Activated T-helper 1 cell treated with anti-CD3 and anti-CD28 coated beads, Interleukin-12 subunit alpha, Interleukin-12 subunit beta, Interleukin-2, Interleukin-4 antibody, amounts not matched to agents 30 ng/mL and 10 ng/mL and 1 ng/mL, durations not matched to agents 14 hours and 24 hours and 36 hours (primary cell): ENCODE measurements at regions of chr17 and their contacts with region 1.

Region 1: GRCh38 chr17:55527540-55528118 is 16.4 kb upstream of the SMIM36 start:
- DNase-seq: no peak
- H3K4me3 Mint-ChIP-seq: no peak overlapping the region
- H3K27ac Mint-ChIP-seq: no peak overlapping the region
- H3K4me1 Mint-ChIP-seq: peaks cover 9% of the 10 kb centered on the region
- H3K27me3 Mint-ChIP-seq: peaks cover 5% of the 10 kb centered on the region

Region 2: DNA sequence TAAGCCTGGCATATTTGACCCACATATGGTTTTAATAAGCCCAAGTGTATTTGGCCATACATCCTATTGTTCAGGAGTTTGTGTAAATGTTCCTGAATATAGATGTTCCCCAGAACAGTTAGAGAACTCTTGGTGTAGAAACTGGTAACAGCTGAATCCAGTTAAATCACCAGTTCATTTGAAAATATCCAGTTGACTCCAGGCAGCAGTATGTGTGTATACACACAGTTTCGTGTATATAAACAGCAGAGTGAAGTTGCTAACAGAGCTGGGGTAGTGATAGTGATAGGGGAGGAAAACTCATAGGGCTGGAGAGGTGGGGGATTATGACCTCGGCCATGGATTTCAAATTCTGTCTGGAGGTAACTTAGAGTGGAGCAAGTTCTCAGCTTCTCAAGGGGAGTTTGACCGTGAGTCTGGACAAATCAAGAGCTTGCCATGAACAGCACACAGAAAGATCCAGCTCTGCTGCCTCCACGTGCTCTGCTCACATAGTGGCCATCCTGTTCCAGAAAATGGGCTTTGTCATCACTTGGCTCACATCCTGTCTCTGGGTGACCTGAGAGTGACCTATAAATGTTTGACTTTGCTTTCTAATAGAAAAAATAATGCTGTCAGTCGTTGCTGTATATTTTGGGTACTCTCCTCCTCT is 75.4 kb before region 1 on chr17:
- intact Hi-C with region 1: no loop called
- DNase-seq: no peak
- H3K4me3 Mint-ChIP-seq: no peak overlapping the region
- H3K27ac Mint-ChIP-seq: no peak overlapping the region
- H3K4me1 Mint-ChIP-seq: peaks cover 17% of the 10 kb centered on the region
- H3K27me3 Mint-ChIP-seq: peaks cover 6% of the 10 kb centered on the region

Region 3: GRCh38 chr17:55601874-55602364 is 74.3 kb after region 1 on chr17:
- intact Hi-C with region 1: loop called (anchors 1 kb)
- DNase-seq: no peak
- H3K4me3 Mint-ChIP-seq: no peak overlapping the region
- H3K27ac Mint-ChIP-seq: no peak overlapping the region
- H3K4me1 Mint-ChIP-seq: no peaks in the 10 kb centered on the region
- H3K27me3 Mint-ChIP-seq: peaks cover 3% of the 10 kb centered on the region

Region 4: DNA sequence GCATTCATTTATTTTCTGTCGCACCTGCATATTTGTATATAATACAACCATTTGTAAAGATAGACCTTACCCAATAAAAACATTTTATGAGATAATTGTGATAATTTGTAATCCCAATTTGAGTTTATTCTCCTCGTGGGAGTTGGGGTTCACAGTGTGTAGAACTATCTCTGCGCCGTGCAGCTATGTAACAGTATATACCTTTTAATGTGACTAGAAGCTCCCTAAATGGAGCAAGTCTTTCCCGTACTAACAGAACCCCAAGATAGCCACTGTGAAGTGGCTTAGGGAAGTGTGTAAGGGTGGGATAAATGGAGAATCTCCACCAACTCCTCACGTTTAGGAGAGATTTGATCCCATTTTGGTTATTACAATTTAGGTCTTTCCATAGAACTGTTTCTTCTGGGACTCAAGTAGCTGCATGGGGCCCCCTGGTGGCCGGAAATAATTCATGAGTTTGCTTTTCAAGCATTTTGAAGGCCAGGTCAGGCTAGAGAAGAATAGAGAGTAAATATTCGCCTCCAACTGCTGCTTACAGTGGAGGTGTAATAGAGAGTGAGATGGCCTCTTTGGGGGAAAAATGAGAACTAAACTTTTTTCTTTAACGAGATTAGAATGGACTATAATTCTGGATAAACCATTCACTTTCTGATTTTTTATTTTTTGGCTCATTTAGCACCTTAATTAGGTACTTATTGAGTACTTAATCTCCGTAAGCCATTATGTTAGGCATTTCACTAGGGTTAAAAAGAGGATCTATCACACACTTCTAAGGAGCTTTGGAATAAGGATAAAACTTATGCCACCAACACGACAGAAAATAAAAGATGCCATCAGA is 190.5 kb after region 1 on chr17:
- intact Hi-C with region 1: loop called (anchors 1 kb)
- DNase-seq: peak; percentile 31
- H3K4me3 Mint-ChIP-seq: no peak overlapping the region
- H3K27ac Mint-ChIP-seq: no peak overlapping the region
- H3K4me1 Mint-ChIP-seq: no peaks in the 10 kb centered on the region
- H3K27me3 Mint-ChIP-seq: peaks cover 16% of the 10 kb centered on the region

Region 5: GRCh38 chr17:55825213-55825612 is 297.6 kb after region 1 on chr17:
- intact Hi-C with region 1: loop called (anchors 1 kb)
- DNase-seq: no peak
- H3K4me3 Mint-ChIP-seq: no peak overlapping the region
- H3K27ac Mint-ChIP-seq: no peak overlapping the region
- H3K4me1 Mint-ChIP-seq: no peaks in the 10 kb centered on the region
- H3K27me3 Mint-ChIP-seq: peaks cover 3% of the 10 kb centered on the region